MCF 10A (cell line): ENCODE measurements at regions of chr7 and their contacts with region 1.

Region 1: DNA sequence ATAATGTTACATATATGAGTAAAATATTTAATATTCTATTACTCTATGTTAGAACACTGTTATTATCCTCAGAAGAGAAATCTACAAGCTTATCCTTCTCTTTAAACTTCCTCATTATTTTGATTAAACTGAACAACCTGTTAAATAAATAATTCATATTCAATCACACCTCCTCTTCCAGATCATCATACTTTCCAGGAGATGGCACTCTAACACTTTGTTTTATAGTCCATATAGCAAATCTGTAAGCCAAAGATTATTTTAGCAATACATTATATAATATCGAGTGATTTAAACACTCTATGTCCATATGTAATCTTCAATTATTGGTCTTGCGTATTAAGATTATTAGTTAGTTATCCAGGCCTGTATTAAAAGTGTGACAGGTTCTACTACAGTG is 694.1 kb downstream of the ANKRD7 start:
- DNase-seq: peak; percentile 35
- H3K4me3 Mint-ChIP-seq: no peak overlapping the region
- H3K27ac Mint-ChIP-seq: no peak overlapping the region
- H3K4me1 Mint-ChIP-seq: no peaks in the 10 kb centered on the region
- H3K27me3 Mint-ChIP-seq: peaks cover 64% of the 10 kb centered on the region
- CTCF ChIP-seq: peak; percentile 42

Region 2: GRCh38 chr7:118250860-118251494 is 667.6 kb before region 1 on chr7:
- CTCF ChIA-PET with region 1: no interaction called
- POLR2A ChIA-PET with region 1: no interaction called
- intact Hi-C with region 1: loop called (anchors 10 kb)
- DNase-seq: no peak
- H3K4me3 Mint-ChIP-seq: no peak overlapping the region
- H3K27ac Mint-ChIP-seq: no peak overlapping the region
- H3K4me1 Mint-ChIP-seq: no peaks in the 10 kb centered on the region
- H3K27me3 Mint-ChIP-seq: peaks cover 81% of the 10 kb centered on the region
- CTCF ChIP-seq: no peak

Region 3: DNA sequence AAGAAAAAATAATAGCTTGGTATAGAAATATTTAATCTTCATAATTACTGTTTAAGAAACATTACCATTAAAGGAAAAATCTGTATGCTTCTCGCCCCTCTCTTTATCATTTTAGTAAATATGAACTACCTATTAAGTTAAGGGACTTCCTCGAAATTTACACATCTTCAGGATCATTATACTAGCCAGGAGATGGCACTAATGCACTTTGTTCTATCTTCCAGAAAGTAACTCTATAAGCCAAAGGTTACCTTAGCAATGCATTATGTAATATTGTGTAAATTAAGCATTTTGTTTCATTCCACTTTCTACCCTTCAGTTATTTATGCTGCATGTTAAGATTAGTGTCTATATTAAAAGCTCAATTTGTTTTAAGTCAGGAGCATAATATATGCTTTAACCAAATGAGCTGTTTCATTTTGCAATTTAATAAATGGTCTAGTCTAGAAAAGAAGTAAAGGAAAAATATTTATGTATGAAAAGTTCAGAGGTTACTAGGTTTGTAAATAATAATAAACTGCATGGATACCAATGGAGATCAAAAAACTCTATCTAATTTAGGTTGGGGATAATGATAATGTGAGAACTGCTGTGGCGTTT is 565.6 kb before region 1 on chr7:
- CTCF ChIA-PET with region 1: interaction called, 3 read pairs
- POLR2A ChIA-PET with region 1: no interaction called
- intact Hi-C with region 1: loop called (anchors 5 kb)
- DNase-seq: peak; percentile 42
- H3K4me3 Mint-ChIP-seq: no peak overlapping the region
- H3K27ac Mint-ChIP-seq: no peak overlapping the region
- H3K4me1 Mint-ChIP-seq: peaks cover 6% of the 10 kb centered on the region
- H3K27me3 Mint-ChIP-seq: no peaks in the 10 kb centered on the region
- CTCF ChIP-seq: peak; percentile 46

Region 4: DNA sequence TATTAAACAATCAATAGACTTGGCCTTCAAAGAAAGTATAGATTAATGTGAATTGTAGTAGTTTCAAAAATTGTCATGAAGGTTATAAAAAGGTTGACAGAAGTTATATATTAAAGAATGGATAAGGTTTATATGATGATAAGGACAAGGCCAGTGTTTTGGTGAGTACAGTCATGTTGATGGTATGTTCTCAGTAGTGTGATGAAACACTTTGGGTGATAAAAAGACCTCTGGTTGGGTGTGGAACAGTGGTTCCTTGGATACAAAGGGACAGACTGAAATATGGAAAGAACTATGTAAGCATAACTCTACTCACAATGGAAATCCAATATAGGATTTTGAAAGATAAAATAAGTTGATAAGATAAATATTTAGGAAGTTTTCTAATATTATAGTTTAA is 172.3 kb after region 1 on chr7:
- CTCF ChIA-PET with region 1: no interaction called
- POLR2A ChIA-PET with region 1: no interaction called
- intact Hi-C with region 1: no loop called
- DNase-seq: peak; percentile 4
- H3K4me3 Mint-ChIP-seq: no peak overlapping the region
- H3K27ac Mint-ChIP-seq: no peak overlapping the region
- H3K4me1 Mint-ChIP-seq: peaks cover 6% of the 10 kb centered on the region
- H3K27me3 Mint-ChIP-seq: peaks cover 11% of the 10 kb centered on the region
- CTCF ChIP-seq: no peak

Region 5: DNA sequence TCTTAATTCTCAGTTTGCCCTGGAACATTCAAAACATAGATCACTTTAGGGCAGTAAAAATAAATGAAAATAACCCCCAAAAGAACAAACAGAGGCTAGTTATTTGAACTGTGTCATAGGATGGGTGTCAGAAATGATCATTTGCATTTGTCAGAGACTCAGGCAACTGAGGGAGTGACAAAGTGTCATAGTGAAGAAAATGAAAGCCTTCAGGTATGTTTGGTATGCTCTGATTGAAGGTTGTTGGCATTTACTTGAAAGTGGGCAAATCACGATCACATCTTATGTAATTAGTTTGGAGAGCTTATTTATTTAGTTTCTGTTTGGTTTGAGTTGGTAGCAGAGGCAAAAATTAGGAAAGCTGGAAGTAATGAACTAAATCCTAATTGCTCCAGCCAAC is 186.8 kb after region 1 on chr7:
- CTCF ChIA-PET with region 1: no interaction called
- POLR2A ChIA-PET with region 1: no interaction called
- intact Hi-C with region 1: no loop called
- DNase-seq: no peak
- H3K4me3 Mint-ChIP-seq: no peak overlapping the region
- H3K27ac Mint-ChIP-seq: no peak overlapping the region
- H3K4me1 Mint-ChIP-seq: no peaks in the 10 kb centered on the region
- H3K27me3 Mint-ChIP-seq: peaks cover 42% of the 10 kb centered on the region
- CTCF ChIP-seq: no peak

Region 6: GRCh38 chr7:119175911-119176627 is 257.5 kb after region 1 on chr7:
- CTCF ChIA-PET with region 1: interaction called, 38 read pairs
- POLR2A ChIA-PET with region 1: no interaction called
- intact Hi-C with region 1: loop called (anchors 1 kb)
- DNase-seq: peak; percentile 79
- H3K4me3 Mint-ChIP-seq: no peak overlapping the region
- H3K27ac Mint-ChIP-seq: no peak overlapping the region
- H3K4me1 Mint-ChIP-seq: no peaks in the 10 kb centered on the region
- H3K27me3 Mint-ChIP-seq: peaks cover 75% of the 10 kb centered on the region
- CTCF ChIP-seq: peak; percentile 78

Region 7: GRCh38 chr7:119197877-119198527 is 279.4 kb after region 1 on chr7:
- CTCF ChIA-PET with region 1: interaction called, 29 read pairs
- POLR2A ChIA-PET with region 1: no interaction called
- intact Hi-C with region 1: loop called (anchors 1 kb)
- DNase-seq: peak; percentile 56
- H3K4me3 Mint-ChIP-seq: no peak overlapping the region
- H3K27ac Mint-ChIP-seq: no peak overlapping the region
- H3K4me1 Mint-ChIP-seq: no peaks in the 10 kb centered on the region
- H3K27me3 Mint-ChIP-seq: peaks cover 68% of the 10 kb centered on the region
- CTCF ChIP-seq: peak; percentile 70

Region 8: GRCh38 chr7:120554960-120555571 is 1636.5 kb after region 1 on chr7:
- CTCF ChIA-PET with region 1: no interaction called
- POLR2A ChIA-PET with region 1: no interaction called
- intact Hi-C with region 1: loop called (anchors 5 kb)
- DNase-seq: peak; percentile 60
- H3K4me3 Mint-ChIP-seq: no peak overlapping the region
- H3K27ac Mint-ChIP-seq: no peak overlapping the region
- H3K4me1 Mint-ChIP-seq: no peaks in the 10 kb centered on the region
- H3K27me3 Mint-ChIP-seq: peaks cover 76% of the 10 kb centered on the region
- CTCF ChIP-seq: peak; percentile 72